ENCODE measurements at regions of chr19 and their contacts with region 1.

Region 1: DNA sequence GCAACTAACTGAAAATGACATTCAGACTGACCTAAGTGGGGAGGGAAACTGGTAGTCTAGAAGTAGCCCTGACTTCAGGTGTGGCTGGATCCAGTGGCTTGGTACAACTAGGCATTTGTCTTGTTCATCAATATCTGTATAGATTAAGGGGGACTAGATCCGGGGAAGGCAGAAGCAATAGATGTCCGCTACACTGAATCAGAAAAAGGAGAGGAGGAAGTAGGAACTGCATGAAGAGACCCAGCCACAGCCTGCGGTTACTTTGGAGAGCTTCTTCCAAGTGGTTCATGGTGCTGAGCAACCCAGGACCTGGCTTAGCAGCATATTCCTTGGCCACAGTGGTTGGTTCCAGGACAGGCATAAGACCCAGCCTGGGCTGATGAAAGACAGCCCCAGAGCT is 9.9 kb upstream of the PRODH2 start:
- DNase-seq: no peak
- ATAC-seq: no peak
- H3K4me3 ChIP-seq: no peak overlapping the region
- H3K27ac ChIP-seq: no peak overlapping the region
- H3K4me1 ChIP-seq: peaks cover 0 to 8% of the 10 kb centered on the region in 2 experiments; a peak in 2 of 4 replicates
- H3K27me3 ChIP-seq: peaks cover 11% of the 10 kb centered on the region
- CTCF ChIP-seq: no peak
- POLR2A ChIP-seq: no peak
- RAD21 ChIP-seq: no peak

Region 2: GRCh38 chr19:35986664-35987570 is 164.3 kb after region 1 on chr19:
- CTCF ChIA-PET with region 1: no interaction called
- POLR2A ChIA-PET with region 1: no interaction called
- RAD21 ChIA-PET with region 1: interaction called in 1 of 2 experiments, 10 read pairs
- intact Hi-C with region 1: no loop called
- DNase-seq: no peak
- ATAC-seq: peak; percentile 87
- H3K4me3 ChIP-seq: peak overlapping the region; percentile 40 to 56
- H3K27ac ChIP-seq: no peak overlapping the region
- H3K4me1 ChIP-seq: peaks cover 9 to 19% of the 10 kb centered on the region in 2 experiments; a peak in 3 of 4 replicates
- H3K27me3 ChIP-seq: 0 out of 2 replicates have a peak, but pooled peaks cover 3% of the 10 kb centered on the region
- CTCF ChIP-seq: no peak
- POLR2A ChIP-seq: no peak
- RAD21 ChIP-seq: no peak

Measured in HCT116 (cell line).